Calu3 (cell line): ENCODE measurements at regions of chr5 and their contacts with region 1.

Region 1: DNA sequence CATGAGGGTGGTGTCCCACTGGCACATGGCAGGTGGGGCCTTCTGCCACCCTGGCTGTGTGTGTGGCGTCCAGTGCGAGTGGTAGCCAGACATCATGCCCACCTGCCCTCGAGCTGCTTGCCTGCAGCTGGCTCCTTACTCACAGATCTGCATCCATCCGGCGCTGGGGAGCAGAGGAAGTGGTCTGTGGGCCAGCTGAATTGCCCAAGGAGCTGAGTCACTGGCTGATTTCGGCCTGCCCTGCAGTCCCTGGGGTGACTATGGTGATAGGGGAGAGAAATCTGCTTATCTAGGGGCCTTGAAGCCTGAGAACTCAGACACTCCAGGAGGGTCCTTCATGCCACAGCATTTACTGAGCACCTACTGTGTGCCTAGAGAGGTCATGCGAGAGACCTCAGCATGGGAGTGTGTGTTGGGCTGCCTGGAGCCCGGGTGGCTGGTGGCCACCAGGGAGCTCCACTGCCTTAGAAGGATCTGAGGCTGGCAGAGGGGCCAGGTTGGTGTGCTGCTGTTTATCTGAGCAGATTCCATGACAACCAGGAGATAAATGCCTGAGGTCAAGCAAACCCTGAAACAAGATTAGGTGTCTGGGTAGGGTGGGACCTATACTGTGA is 57.1 kb downstream of the SLC22A5 start:
- DNase-seq: peak; percentile 75
- H3K4me3 Mint-ChIP-seq: no peak overlapping the region
- H3K27ac Mint-ChIP-seq: no peak overlapping the region
- H3K4me1 Mint-ChIP-seq: peaks cover 65% of the 10 kb centered on the region
- H3K27me3 Mint-ChIP-seq: no peaks in the 10 kb centered on the region
- CTCF ChIP-seq: peak; percentile 28

Region 2: GRCh38 chr5:132410451-132411381 is 15.9 kb before region 1 on chr5:
- CTCF ChIA-PET with region 1: interaction called, 11 read pairs
- intact Hi-C with region 1: no loop called
- DNase-seq: peak; percentile 91
- H3K4me3 Mint-ChIP-seq: peak overlapping the region; percentile 75
- H3K27ac Mint-ChIP-seq: peak overlapping the region; percentile 78
- H3K4me1 Mint-ChIP-seq: peaks cover 59% of the 10 kb centered on the region
- H3K27me3 Mint-ChIP-seq: no peaks in the 10 kb centered on the region
- CTCF ChIP-seq: peak; percentile 85

Region 3: DNA sequence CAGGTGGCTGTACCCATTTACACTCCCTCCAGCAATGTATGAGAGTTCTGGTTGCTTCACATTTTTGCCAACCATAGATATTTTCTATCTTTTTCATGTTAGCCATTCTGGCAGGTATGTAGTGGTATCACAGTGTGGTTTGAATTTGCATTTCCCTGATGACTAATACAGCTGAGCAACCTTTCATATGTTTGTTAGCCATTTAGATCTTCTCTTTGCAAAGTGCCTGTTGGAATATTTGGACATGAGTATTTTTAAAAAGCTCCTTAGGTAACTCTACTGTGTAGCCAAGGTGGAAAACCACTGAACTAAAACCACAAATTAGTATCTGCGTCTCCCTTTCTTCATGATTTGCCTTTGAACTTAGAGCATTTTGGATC is 32.0 kb after region 1 on chr5:
- CTCF ChIA-PET with region 1: interaction called, 7 read pairs
- intact Hi-C with region 1: loop called (anchors 1 kb)
- DNase-seq: no peak
- H3K4me3 Mint-ChIP-seq: no peak overlapping the region
- H3K27ac Mint-ChIP-seq: peak overlapping the region; percentile 68
- H3K4me1 Mint-ChIP-seq: peaks cover 48% of the 10 kb centered on the region
- H3K27me3 Mint-ChIP-seq: no peaks in the 10 kb centered on the region
- CTCF ChIP-seq: no peak

Region 4: DNA sequence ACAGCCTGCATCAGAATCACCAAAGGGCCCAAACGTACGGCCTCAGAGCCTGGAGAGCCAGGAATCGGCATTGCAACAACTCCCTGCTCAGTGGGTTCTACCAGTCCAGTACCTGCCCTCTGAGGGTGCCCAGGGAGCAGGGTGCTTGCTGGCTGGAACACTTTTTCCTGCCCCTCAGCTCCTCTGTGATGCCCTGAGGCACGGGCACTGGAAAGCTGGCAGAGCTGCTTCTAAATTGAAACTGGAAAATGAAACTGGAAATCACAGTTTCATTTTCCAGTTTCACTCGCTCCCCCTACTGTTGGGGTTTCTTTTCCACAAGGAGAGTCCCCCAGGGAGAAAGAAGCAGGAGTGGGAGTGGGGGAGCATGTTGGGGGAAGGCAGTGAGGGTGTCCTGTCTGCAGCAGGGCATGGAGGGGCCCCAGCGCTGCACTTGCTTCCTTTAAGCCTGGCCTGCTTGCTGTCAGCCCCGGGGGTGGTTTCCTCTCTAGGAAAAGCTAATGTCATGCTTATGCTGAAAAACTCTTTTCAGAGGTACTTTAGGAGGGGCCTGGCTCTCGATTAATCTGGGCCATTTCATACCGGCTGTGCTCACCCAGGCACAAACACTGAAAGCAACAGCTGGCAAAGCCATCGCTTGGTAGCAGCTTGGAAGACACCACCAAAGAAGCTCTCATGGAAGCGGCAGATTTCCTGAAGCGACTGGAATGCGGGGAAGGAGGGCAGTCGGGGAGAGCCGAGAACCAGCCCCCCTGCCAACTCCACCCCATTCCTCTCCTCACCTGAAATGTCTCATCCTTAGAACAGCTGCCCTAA is 37.7 kb after region 1 on chr5:
- CTCF ChIA-PET with region 1: interaction called, 25 read pairs
- intact Hi-C with region 1: no loop called
- DNase-seq: peak; percentile 43
- H3K4me3 Mint-ChIP-seq: peak overlapping the region; percentile 45
- H3K27ac Mint-ChIP-seq: peak overlapping the region; percentile 9
- H3K4me1 Mint-ChIP-seq: peaks cover 72% of the 10 kb centered on the region
- H3K27me3 Mint-ChIP-seq: no peaks in the 10 kb centered on the region
- CTCF ChIP-seq: peak; percentile 38

Region 5: DNA sequence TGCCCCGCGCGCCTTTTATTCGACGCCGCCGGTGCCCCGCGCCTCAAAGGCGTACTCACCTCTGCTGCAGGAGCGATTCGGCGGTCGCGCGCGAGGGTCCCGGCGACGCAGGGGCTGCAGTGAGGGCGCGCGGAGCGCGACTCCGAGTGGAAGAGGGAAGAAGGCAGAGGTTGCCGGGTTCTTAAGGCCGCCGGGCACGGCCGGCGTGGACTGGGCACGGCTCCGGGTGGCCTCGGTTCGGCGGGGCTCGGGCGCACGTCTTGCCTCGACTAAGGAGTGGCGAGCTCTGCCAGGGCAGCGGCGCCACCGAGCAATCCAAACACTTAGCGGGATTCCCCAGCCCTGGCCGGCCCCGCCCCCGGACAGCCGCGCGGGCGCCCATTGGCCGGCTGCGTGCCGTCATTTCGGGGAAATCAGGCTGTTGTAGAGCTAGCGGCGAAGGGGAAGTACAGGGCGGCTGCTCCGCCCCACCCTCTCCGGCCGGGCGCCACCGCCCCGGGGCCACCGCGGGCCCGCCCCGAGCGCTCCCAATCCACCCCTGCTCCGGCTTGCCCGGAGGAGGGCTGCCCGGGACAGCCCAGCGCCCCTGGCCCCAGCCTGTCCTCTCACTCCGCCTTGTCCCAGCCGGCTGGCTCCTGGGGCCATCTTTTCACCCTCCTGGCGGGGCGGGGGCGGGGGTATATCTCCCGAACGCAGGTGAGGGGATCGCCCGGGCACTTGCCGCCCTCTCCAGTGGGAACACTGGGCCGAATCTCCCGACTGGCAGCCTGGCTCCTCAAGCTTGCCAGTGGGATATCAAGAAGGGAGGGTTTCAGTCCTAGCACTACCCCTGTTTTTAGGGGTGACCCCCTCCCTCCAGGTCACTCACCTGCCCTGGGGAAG is 64.1 kb after region 1 on chr5 and contains the start of gene IRF1:
- CTCF ChIA-PET with region 1: interaction called, 11 read pairs
- intact Hi-C with region 1: no loop called
- DNase-seq: peak; percentile 99
- H3K4me3 Mint-ChIP-seq: peak within 1 kb of the TSS; percentile 89
- H3K27ac Mint-ChIP-seq: peak within 1 kb of the TSS; percentile 76
- H3K4me1 Mint-ChIP-seq: peaks cover 46% of the 10 kb centered on the region
- H3K27me3 Mint-ChIP-seq: no peaks in the 10 kb centered on the region
- CTCF ChIP-seq: no peak
- total RNA-seq, gene IRF1: 64.0 and 82.4 TPM in 2 replicates

Region 6: DNA sequence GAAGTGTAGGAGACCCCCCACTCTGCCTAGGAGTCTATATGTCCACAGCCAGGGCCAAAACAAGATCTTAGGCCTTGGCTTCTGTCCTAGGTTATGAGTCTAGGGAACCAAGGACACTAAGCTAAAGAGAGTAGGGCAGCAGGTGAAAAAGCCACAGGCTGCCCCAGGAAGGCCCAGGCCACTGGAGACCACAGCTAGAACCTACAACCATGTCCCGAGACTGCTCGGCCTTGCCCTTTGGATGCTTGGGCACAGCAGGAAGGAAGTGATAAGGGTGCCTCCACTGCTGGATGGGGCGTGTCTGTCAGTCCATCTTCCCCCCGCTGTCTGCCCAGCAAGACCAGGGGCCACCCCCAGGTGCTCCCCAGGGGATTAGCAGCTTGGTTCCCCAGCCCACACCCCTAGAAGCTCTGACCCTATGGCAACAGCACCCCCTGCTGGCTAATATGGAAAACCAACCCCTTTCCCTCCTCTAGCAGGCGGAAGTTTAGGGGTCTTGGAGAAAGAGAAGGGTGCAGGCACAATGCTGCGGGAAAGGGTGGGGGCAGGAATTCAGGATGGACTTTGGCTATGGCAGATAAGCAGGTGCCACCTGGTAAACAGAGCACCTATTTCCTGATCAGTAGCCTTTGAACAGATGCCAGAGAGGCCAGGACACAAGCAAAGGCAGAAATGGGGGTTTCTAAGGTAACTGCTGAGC is 74.4 kb after region 1 on chr5:
- CTCF ChIA-PET with region 1: interaction called, 25 read pairs
- intact Hi-C with region 1: no loop called
- DNase-seq: peak; percentile 78
- H3K4me3 Mint-ChIP-seq: no peak overlapping the region
- H3K27ac Mint-ChIP-seq: peak overlapping the region; percentile 7
- H3K4me1 Mint-ChIP-seq: peaks cover 70% of the 10 kb centered on the region
- H3K27me3 Mint-ChIP-seq: no peaks in the 10 kb centered on the region
- CTCF ChIP-seq: peak; percentile 94